Left ventricle myocardium superior (tissue), 1 donor: ENCODE measurements at regions of chr3 and their contacts with region 1.

Region 1: DNA sequence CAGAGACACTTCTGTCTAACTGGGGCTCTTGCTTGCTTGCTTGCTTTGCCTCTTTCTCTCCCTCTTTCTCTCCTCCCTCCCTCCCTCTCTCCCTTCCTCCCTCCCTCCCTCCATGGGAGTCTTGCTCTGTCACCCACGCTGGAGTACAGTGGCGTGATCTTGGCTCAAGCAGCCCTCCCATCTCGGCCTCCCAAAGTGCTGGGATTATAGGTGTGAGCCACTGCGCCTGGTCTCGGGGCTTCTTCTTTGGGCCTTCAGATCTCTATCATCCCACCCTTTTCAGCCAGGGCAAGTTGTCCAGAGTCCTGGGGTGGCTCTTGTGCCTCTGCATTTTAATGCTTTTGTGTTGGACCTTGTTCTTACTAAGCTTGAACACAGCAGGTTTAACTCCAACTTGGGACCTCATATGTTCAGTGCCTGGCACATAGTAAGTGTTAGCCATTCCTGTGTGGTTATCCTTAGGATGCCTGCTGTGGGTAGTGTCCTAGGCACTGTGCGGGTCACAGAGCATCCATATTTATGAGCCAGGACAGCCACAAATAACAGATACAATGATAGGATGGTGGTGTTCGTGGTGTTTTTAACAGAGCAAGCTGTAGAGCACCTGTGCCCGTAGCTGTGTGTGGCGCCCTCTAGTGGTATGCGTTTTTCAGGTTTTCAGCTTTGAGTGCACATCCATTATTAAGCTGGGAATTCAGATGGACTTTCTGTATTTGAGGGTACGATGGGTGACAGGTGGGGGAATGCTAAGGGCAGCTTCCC is 75.1 kb downstream of the CCK start:
- DNase-seq: no peak
- ATAC-seq: peak; percentile 48

Region 2: DNA sequence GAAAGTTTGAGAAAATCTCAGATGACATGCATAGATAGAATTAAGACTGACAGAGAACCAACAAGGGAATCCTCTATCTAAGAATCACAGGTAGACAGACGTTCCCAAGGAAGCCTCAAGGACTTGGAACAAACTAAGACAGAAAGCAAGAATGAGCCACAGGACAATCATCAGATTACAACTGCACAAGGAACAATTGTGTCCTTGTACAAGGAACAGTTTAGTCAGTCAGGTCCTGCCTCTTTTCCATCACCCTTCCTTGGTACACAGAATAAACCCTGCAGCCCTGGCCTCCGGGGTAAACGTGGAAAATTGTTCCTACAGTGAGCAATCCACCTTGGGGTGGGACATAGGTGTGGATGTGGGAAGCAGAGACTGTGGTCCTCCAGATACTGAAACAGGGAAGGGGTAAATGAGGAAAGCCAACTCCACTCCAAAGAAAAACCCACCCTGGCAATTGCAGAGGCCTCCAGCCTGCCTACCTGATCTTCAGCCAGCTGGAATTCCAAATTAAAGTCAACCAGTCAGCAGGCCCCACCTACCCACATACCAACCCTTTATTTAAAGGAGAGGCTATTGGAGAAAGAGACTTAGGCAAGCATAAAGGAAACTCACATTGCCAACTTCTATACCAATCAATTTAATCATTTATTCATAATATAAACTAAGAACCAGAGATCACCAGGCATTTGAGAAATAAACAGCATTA is 302.4 kb before region 1 on chr3:
- intact Hi-C with region 1: no loop called
- DNase-seq: no peak
- ATAC-seq: no peak

Region 3: DNA sequence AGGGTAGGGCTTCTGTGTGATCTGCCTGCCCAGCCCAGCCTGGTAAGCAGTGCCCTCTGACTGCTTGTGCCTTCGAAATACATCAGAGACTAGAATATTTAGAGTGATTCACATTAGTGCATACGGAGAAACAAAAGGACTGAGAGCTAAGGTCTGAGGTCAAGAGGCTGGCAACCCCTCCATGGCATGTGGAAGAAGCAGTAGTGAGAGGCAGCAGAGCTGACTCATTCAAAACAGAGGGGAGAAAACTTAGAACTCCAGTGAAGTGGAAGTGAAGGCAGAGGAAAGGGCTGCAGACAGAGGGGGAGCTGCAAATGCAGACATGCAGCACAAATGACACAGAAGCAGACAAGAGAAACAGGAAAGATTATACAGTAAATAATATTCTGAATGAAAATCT is 290.6 kb before region 1 on chr3:
- intact Hi-C with region 1: loop called (anchors 10 kb)
- DNase-seq: no peak
- ATAC-seq: no peak

Region 4: GRCh38 chr3:42118762-42119361 is 72.0 kb before region 1 on chr3:
- intact Hi-C with region 1: loop called (anchors 5 kb)
- DNase-seq: no peak
- ATAC-seq: peak; percentile 58

Region 5: GRCh38 chr3:42403737-42404136 is 212.9 kb after region 1 on chr3:
- intact Hi-C with region 1: no loop called
- DNase-seq: no peak
- ATAC-seq: no peak

Region 6: DNA sequence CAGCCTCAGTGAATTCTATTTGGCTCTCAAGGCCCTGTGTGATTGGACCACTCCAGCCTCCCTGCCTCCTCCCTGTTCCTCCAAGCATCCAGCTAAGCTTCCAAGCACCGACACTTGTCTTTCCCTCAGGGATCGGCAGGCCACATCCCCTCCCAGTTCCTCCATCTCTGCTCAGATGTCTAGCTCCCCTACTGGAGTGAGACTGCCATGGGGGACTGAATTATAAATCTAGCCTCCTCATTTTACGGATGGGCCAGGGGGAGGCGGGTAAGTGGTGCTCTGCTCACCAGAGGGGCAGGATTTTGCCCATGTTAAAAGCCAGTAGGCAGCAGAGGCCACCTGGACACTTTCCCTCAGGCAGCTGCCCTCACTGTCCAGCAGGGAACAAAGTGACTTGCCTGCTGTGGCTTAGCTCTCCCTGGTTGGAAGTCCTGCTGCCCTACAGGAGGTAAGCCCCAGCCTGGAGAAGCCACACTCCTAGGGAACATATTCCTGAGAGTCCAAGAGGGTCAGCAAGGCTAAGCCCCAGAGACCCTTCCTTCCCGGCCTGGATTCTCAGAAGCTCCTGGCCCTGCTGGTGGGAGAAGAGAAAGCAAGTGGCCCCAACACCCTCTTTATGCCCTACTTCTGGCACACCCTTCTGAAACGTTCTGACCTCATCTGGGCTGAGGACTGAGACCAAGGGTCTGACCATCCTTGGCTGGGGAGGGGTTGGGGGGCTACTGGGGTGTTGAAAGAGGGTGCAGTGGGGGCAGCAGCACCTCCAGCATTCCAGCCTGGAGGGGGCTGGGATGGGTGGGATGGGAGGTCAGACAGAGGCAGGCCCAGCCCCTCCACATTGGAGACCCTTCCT is 520.8 kb after region 1 on chr3:
- intact Hi-C with region 1: no loop called
- DNase-seq: no peak
- ATAC-seq: no peak